Activated naive CD8-positive, alpha-beta T cell treated with anti-CD3 and anti-CD28 coated beads, Interleukin-2, amount 10 ng/mL, durations not matched to agents 7 days and 5 days (primary cell): ENCODE measurements at regions of chr14 and their contacts with region 1.

Region 1: GRCh38 chr14:69611201-69612011 is at the start of gene SUSD6:
- DNase-seq: peak; percentile 88
- ATAC-seq: peak; percentile 73
- H3K4me3 Mint-ChIP-seq: peak within 1 kb of the TSS; percentile 100
- H3K27ac Mint-ChIP-seq: peak within 1 kb of the TSS; percentile 98
- H3K4me1 Mint-ChIP-seq: peaks cover 54% of the 10 kb centered on the region
- H3K27me3 Mint-ChIP-seq: no peaks in the 10 kb centered on the region
- total RNA-seq, gene SUSD6: 42.9 to 44.5 TPM

Region 2: GRCh38 chr14:69535230-69535848 is 76.1 kb before region 1 on chr14:
- POLR2A ChIA-PET with region 1: no interaction called
- DNase-seq: no peak
- ATAC-seq: no peak
- H3K4me3 Mint-ChIP-seq: no peak overlapping the region
- H3K27ac Mint-ChIP-seq: no peak overlapping the region
- H3K4me1 Mint-ChIP-seq: peaks cover 3% of the 10 kb centered on the region
- H3K27me3 Mint-ChIP-seq: peaks cover 43% of the 10 kb centered on the region

Region 3: GRCh38 chr14:69572030-69572840 is 39.2 kb before region 1 on chr14:
- POLR2A ChIA-PET with region 1: no interaction called
- DNase-seq: peak; percentile 48
- ATAC-seq: no peak
- H3K4me3 Mint-ChIP-seq: peak overlapping the region; percentile 35
- H3K27ac Mint-ChIP-seq: no peak overlapping the region
- H3K4me1 Mint-ChIP-seq: peaks cover 8% of the 10 kb centered on the region
- H3K27me3 Mint-ChIP-seq: peaks cover 80% of the 10 kb centered on the region

Region 4: DNA sequence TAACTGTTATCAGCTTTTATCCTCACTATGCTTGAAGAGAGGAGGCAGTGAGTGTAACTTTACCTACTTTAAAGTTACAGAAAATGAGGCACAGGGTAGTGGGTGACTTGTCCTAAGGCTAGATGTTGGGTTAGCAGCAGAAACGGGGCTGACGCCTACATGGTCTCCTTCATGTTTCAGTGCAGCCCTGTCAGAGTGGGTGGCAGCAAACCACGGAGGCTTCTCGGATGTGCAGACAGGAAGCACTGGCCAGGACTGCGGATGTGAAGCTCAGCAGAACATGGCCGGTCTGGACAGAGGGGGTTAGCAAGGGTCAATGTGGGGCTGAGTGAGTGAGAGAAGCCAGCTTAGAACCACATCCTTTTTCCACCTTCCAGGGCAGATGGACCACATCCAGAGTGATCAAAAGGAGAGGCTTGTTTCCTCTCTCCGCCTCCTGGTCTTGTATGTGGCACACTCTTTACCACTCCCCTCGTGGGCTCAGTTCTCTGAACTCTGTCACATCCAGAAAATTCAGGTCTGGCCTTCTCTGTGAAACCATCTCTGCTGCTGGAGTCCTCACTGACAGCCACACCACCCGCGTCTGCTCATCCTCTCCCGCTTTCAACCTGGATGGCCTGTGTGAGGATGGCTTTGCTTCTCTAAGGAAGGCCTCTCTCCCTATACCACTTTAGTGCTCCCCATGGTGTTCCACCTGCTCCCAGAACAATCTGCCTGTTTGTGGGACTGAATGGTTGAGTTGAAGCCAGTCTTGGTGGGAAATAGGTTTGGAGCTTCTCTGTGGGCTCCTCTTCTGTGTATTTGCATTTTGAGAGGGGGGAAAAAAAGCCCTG is 14.1 kb after region 1 on chr14:
- POLR2A ChIA-PET with region 1: interaction called, 25 read pairs
- DNase-seq: peak; percentile 76
- ATAC-seq: peak; percentile 91
- H3K4me3 Mint-ChIP-seq: peak overlapping the region; percentile 77
- H3K27ac Mint-ChIP-seq: peak overlapping the region; percentile 88
- H3K4me1 Mint-ChIP-seq: peaks cover 73% of the 10 kb centered on the region
- H3K27me3 Mint-ChIP-seq: no peaks in the 10 kb centered on the region